ENCODE measurements at regions of chr12 and their contacts with region 1.

Region 1: GRCh38 chr12:751192-751998 is 984 bp upstream of the WNK1 start:
- DNase-seq: peak; percentile 61 to 95 (median 82)
- ATAC-seq: peak; percentile 21
- H3K4me3 ChIP-seq: peak overlapping the region; percentile 58 to 88
- H3K4me3 Mint-ChIP-seq: no peak overlapping the region
- H3K27ac ChIP-seq: peak overlapping the region; percentile 68 to 76
- H3K27ac Mint-ChIP-seq: no peak overlapping the region
- H3K4me1 ChIP-seq: peaks cover 25% of the 10 kb centered on the region
- H3K4me1 Mint-ChIP-seq: peaks cover 20% of the 10 kb centered on the region
- H3K27me3 ChIP-seq: no peaks in the 10 kb centered on the region
- H3K27me3 Mint-ChIP-seq: no peaks in the 10 kb centered on the region
- CTCF ChIP-seq: peak; percentile 48

Region 2: GRCh38 chr12:607526-608001 is 143.8 kb before region 1 on chr12:
- CTCF ChIA-PET with region 1: interaction called, 19 read pairs
- POLR2A ChIA-PET with region 1: no interaction called
- intact Hi-C with region 1: loop called in 1 of 2 experiments (anchors 2 kb)
- DNase-seq: no peak
- ATAC-seq: no peak
- H3K4me3 ChIP-seq: no peak overlapping the region
- H3K4me3 Mint-ChIP-seq: no peak overlapping the region
- H3K27ac ChIP-seq: no peak overlapping the region
- H3K27ac Mint-ChIP-seq: peak overlapping the region; percentile 62
- H3K4me1 ChIP-seq: peaks cover 13% of the 10 kb centered on the region
- H3K4me1 Mint-ChIP-seq: peaks cover 29% of the 10 kb centered on the region
- H3K27me3 ChIP-seq: no peaks in the 10 kb centered on the region
- H3K27me3 Mint-ChIP-seq: no peaks in the 10 kb centered on the region
- CTCF ChIP-seq: no peak

Region 3: DNA sequence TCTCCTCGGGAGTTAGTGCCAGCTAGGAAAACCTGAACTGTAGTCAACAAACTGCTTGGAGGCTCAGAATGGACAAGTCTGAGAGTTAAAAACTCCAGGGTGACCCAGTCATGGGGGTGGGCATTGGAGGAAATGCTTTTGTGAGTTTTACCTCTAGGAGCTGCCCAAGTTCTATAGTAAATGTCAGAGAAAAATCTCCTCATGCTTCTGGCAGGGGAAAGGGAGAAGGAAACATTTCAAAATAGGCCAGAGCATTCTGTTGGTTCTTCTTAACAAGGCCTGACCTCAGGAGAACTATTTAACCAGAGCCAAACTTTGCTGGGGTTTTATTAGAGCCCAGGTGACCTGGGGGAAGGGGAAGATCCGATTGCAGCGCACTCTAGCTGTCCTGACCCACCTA is 100.4 kb before region 1 on chr12:
- CTCF ChIA-PET with region 1: interaction called, 22 read pairs
- POLR2A ChIA-PET with region 1: interaction called, 3 read pairs
- intact Hi-C with region 1: no loop called
- DNase-seq: peak in 1 of 9 experiments; percentile 49
- ATAC-seq: no peak
- H3K4me3 ChIP-seq: no peak overlapping the region
- H3K4me3 Mint-ChIP-seq: no peak overlapping the region
- H3K27ac ChIP-seq: no peak overlapping the region
- H3K27ac Mint-ChIP-seq: no peak overlapping the region
- H3K4me1 ChIP-seq: no peaks in the 10 kb centered on the region
- H3K4me1 Mint-ChIP-seq: peaks cover 6% of the 10 kb centered on the region
- H3K27me3 ChIP-seq: no peaks in the 10 kb centered on the region
- H3K27me3 Mint-ChIP-seq: no peaks in the 10 kb centered on the region
- CTCF ChIP-seq: no peak

Region 4: GRCh38 chr12:692274-692673 is 59.1 kb before region 1 on chr12:
- CTCF ChIA-PET with region 1: interaction called, 27 read pairs
- POLR2A ChIA-PET with region 1: interaction called, 26 read pairs
- intact Hi-C with region 1: no loop called
- DNase-seq: no peak
- ATAC-seq: no peak
- H3K4me3 ChIP-seq: no peak overlapping the region
- H3K4me3 Mint-ChIP-seq: no peak overlapping the region
- H3K27ac ChIP-seq: no peak overlapping the region
- H3K27ac Mint-ChIP-seq: no peak overlapping the region
- H3K4me1 ChIP-seq: peaks cover 7% of the 10 kb centered on the region
- H3K4me1 Mint-ChIP-seq: peaks cover 17% of the 10 kb centered on the region
- H3K27me3 ChIP-seq: no peaks in the 10 kb centered on the region
- H3K27me3 Mint-ChIP-seq: no peaks in the 10 kb centered on the region
- CTCF ChIP-seq: no peak

Region 5: GRCh38 chr12:774051-774614 is 22.7 kb after region 1 on chr12:
- CTCF ChIA-PET with region 1: interaction called, 4 read pairs
- POLR2A ChIA-PET with region 1: interaction called, 31 read pairs
- intact Hi-C with region 1: loop called (anchors 2 kb)
- DNase-seq: no peak
- ATAC-seq: no peak
- H3K4me3 ChIP-seq: no peak overlapping the region
- H3K4me3 Mint-ChIP-seq: no peak overlapping the region
- H3K27ac ChIP-seq: no peak overlapping the region
- H3K27ac Mint-ChIP-seq: peak overlapping the region; percentile 85
- H3K4me1 ChIP-seq: peaks cover 44% of the 10 kb centered on the region
- H3K4me1 Mint-ChIP-seq: peaks cover 78% of the 10 kb centered on the region
- H3K27me3 ChIP-seq: no peaks in the 10 kb centered on the region
- H3K27me3 Mint-ChIP-seq: no peaks in the 10 kb centered on the region
- CTCF ChIP-seq: no peak

Region 6: DNA sequence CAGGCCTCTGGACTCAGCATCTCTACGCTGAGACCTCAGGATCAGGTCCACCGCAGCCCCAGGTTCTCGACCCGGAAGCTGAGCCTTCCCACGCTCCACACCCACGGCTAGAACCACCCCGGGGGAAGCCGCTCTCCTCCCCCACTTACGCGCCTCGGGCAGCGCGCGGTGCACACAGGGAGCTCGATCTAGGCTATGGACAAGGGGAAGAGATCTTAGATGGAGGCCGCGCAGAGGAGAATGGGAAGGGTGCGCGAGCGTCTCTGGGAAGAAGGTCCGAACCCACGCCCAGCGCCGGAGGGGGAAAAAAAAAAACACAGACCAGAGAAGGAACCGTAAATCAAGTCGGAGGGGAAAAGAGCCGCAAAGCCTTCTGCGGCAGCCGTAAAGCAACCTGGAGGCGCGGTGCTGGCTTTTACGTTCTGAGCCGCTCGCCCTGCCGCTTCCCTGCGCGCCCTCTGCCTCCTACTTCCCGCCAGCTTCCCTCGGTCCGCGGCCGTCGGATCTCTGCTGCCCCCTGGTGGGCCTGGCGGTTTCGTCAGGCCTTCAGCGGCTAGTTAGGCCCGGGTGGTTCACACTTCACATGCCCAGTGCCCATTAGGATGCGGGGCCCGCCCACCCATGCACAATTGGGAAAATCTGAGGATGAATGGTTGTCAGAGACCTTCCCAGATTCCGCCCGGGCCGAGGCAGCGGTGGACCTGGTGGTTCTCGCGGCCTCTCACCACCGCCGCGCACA is 198.2 kb after region 1 on chr12 and contains the start of gene RAD52:
- CTCF ChIA-PET with region 1: interaction called, 3 read pairs
- POLR2A ChIA-PET with region 1: interaction called, 7 read pairs
- intact Hi-C with region 1: loop called in 1 of 2 experiments (anchors 1 kb)
- DNase-seq: peak; percentile 93 to 99 (median 98)
- ATAC-seq: peak; percentile 91
- H3K4me3 ChIP-seq: peak within 1 kb of the TSS; percentile 92 to 98
- H3K4me3 Mint-ChIP-seq: peak within 1 kb of the TSS; percentile 94
- H3K27ac ChIP-seq: peak within 1 kb of the TSS; percentile 70 to 81
- H3K27ac Mint-ChIP-seq: peak within 1 kb of the TSS; percentile 92
- H3K4me1 ChIP-seq: peaks cover 6% of the 10 kb centered on the region
- H3K4me1 Mint-ChIP-seq: peaks cover 26% of the 10 kb centered on the region
- H3K27me3 ChIP-seq: no peaks in the 10 kb centered on the region
- H3K27me3 Mint-ChIP-seq: no peaks in the 10 kb centered on the region
- CTCF ChIP-seq: peak; percentile 94
- total RNA-seq, gene RAD52: 8.1 to 9.6 TPM

Measured in CD8-positive, alpha-beta T cell (primary cell).